Cardiac septum (tissue), 1 donor: ENCODE measurements at regions of chr2 and their contacts with region 1.

Region 1: GRCh38 chr2:241508240-241509154 is at the start of gene STK25:
- DNase-seq: peak; percentile 98
- total RNA-seq, gene STK25: 95.9 TPM

Region 2: DNA sequence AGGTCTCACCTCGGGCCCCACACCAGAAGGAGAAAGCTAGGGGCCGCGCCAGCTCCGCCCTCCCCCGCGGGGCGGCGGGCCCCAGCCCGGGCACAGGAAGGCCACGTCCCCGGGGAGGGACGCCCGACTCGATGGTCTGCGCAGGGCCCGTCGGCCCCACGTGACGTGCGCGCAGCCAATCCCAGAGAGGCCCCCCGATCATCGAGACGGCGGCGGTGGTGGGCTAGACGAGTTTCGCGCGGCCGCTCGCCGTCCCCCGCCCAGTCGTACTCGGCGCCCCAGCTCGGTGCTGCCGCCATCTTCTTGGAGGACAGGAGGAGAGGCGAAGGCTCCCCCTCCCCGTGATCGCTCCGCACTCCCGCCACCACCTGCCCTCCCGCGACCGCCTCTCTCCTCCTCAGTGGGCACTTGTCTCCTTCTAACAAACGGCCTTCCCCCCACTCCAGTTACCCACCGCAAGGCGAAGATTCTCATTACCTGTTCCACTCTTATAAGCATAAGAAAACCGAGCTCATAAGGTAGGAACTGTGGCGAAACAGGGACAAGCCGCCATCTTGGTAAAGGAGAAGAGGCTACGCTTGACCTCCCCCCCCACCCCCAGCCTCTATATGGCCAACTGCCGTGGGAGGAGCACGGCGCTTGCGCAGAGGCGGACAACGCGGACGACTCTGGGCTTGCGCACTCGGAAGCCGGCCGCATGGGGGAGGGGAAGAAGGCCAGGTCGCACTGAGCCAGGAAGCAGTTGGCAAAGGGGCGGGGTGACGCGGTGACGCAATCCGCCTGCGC is 193.2 kb before region 1 on chr2 and contains the start of gene HDLBP:
- intact Hi-C with region 1: no loop called
- DNase-seq: peak; percentile 100
- total RNA-seq, gene HDLBP: 356 TPM

Region 3: DNA sequence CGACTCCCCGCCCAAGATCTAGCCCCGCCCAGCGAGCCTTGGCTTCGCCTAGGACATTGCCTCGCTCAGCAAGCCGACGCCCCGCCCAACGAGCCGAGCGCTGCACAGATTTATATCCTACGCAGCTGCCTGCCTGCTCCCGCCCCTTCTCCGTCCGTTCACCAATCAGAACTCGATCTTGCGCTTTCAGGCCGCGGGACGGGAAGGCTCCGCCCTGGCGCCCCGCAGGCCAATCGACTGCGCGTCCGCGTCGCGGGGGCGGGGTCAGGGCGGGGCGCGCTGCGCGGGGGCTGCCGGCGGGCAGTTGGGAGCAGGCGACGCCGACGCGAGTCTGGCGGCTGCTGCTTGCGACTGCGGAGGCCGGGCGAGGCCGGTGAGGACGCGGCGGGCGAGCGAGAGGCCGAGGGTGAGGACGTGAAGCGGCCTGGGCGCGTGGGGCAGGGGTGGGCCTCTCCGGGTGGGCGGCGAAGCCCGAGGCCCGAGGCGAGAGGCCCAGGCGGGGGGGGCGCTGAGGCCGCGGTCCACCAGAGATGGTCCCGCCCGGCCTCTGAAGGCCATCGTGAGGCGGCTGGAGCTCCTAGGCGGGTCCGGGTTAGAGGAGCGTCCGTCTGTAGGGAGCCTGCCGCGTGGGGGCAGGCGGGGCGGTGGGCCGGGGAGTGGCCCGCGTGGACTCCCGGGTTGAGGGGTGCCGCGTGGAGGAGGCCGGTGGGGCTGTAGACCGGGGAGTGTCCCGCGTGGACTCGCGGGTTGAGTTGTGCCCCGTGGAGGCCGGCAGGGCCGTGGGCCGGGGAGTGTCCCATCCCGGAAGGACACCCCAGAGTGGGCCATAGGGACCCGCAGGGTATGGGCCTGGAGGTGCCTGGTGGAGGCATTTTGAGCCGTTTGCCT is 152.3 kb before region 1 on chr2 and contains the start of gene FARP2:
- intact Hi-C with region 1: loop called (anchors 10 kb)
- DNase-seq: peak; percentile 99
- total RNA-seq, gene FARP2: 24.4 TPM

Region 4: GRCh38 chr2:241558532-241559322 is 50.2 kb after region 1 on chr2 and contains the start of gene BOK:
- intact Hi-C with region 1: loop called (anchors 5 kb)
- DNase-seq: no peak
- total RNA-seq, gene BOK: 4.5 TPM

Region 5: DNA sequence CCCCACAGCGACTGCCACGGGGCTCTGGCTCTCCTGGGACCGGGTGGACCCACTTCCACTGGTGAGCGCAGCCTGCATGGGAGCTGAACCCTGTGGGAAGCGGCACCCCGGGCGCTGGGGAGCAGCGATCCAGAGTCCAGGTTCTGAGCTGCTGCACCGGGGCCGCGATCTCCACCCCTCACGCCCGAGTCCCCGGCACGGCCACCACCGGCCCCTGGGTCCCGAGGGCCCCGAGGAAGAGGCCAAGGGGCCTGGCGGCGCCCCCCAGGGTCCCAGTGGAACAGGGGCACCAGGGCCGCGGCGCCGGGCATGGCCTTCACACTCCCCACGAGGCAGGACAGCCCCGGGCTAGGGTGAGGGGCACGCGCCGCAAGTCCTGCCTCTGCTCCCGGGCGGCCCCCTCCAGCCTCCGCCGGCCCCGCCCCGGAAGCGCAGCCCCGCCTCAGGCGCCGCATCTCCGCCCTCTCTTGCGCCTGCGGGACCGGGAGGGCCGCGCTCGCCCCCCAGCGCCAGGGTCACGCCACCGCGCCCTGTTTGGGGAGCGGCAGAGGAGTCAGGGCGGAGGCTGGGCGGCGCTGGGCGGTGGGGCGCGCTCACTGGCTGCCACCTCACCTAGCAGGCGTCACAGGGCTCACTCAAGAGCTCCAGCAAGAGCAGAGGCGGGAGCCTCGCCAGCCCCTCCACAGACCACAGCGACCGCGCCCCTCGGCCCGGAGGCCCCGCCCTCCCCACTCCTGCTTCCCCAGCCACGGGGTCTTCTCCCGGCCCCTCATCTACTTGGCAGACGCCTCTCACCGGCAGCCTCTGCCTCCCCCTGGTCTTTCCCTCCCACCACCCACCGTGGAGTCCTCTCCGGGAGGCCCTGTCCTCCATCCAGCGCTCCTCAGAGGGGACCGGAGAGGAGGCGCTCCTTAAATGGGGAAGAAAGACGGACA is 101.6 kb after region 1 on chr2:
- intact Hi-C with region 1: loop called (anchors 5 kb)
- DNase-seq: peak; percentile 91

Region 6: GRCh38 chr2:241637000-241637791 is 128.7 kb after region 1 on chr2 and contains the starts of genes ATG4B and THAP4:
- intact Hi-C with region 1: loop called (anchors 5 kb)
- DNase-seq: peak; percentile 95
- total RNA-seq, gene ATG4B: 46.4 TPM
- total RNA-seq, gene THAP4: 73.2 TPM

Region 7: GRCh38 chr2:242020196-242021004 is 511.9 kb after region 1 on chr2:
- intact Hi-C with region 1: no loop called
- DNase-seq: peak; percentile 67